H1 (cell line): ENCODE measurements at regions of chr7 and their contacts with region 1.

Region 1: GRCh38 chr7:135232720-135233119 is 918 bp upstream of the STRA8 start:
- DNase-seq: peak in 1 of 2 experiments; percentile 78
- H3K4me3 ChIP-seq: no peak overlapping the region
- H3K27ac ChIP-seq: no peak overlapping the region
- H3K4me1 ChIP-seq: no peaks in the 10 kb centered on the region
- H3K27me3 ChIP-seq: no peaks in the 10 kb centered on the region
- CTCF ChIP-seq: peak; percentile 57 to 79 (median 75)
- EP300 ChIP-seq: no peak
- POLR2A ChIP-seq: no peak
- RAD21 ChIP-seq: peak; percentile 19 to 46; a peak in 3 of 4 replicates

Region 2: DNA sequence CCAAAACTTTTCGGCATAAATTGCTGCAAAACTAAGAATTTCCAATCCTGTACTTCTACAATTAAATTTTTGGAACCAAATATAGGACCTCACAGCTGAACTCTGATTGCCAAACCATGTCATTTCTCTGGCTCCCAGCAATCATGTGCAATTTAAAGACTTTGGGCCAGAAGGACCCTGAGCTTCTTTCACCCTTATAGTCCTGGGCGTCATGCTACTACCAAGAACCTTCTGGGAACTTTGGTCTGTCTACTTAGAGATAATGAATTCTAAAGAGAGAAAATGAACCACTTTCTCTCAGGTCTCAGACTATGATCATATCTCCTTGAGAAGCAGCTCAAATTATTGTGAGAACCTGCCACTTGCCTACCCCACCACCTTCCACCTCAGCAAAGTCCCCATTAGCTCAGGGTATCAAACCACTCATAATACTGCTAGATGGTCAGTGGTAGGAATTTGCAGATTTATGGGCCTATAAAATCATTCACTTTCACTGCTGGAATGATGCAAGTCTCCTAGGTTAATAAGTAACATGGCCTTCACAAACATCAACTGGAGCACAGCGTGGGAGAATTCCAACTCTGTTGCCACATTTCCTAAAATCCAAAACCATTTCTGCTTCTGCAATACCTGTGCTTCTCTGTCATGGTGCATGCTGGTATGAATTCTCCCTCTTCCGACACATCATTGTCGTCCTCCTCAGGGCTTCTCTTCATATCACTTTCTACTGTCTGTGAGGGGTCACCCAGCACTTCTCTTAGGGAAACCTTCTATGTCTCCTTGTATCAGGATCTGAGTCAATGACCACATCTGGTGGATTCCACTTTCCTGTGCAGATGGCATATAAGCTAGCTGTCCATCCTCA is 14.8 kb before region 1 on chr7:
- CTCF ChIA-PET with region 1: interaction called, 16 read pairs
- POLR2A ChIA-PET with region 1: no interaction called
- DNase-seq: no peak
- H3K4me3 ChIP-seq: no peak overlapping the region
- H3K27ac ChIP-seq: no peak overlapping the region
- H3K4me1 ChIP-seq: peaks cover 0 to 4% (median 1%) of the 10 kb centered on the region in 4 experiments; a peak in 2 of 7 replicates
- H3K27me3 ChIP-seq: no peaks in the 10 kb centered on the region
- CTCF ChIP-seq: no peak
- EP300 ChIP-seq: no peak
- POLR2A ChIP-seq: no peak
- RAD21 ChIP-seq: no peak

Region 3: DNA sequence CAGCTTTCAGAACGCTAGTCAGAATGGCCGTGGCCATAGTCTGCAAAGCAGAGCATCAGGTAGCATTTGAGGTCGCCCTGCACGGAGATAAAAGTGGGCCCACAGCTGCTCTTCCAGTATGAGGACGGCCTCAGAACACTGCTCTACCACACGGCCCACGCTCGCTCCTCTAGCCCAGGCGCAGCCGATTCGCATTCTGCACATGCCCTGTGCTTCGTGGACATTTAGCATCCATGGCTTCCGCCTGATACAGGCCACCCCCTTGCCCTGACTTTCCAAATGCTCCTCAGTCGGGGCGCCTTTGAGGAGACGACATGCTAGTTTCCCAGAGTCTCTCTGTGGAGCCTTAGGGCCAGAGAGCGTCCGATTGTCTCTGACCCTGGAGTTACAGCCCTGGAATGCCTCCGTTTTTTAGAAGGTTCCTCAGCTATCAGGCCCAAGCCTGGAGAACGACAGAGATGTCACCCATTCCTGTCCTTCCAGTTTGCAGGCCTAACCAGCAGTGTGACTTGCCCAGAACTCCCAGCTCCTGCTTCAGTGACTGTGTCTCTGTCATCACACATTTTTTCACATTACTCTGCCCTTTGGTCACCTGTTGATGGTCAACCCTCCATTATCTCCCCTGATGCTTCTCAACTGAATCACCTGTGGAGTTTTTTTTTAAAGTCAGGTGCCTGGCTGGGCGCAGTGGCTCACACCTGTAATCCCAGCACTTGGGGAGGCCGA is 15.2 kb after region 1 on chr7:
- CTCF ChIA-PET with region 1: interaction called, 10 read pairs
- POLR2A ChIA-PET with region 1: no interaction called
- DNase-seq: peak in 1 of 2 experiments; percentile 20
- H3K4me3 ChIP-seq: no peak overlapping the region
- H3K27ac ChIP-seq: no peak overlapping the region
- H3K4me1 ChIP-seq: no peaks in the 10 kb centered on the region
- H3K27me3 ChIP-seq: no peaks in the 10 kb centered on the region
- CTCF ChIP-seq: no peak
- EP300 ChIP-seq: no peak
- POLR2A ChIP-seq: no peak
- RAD21 ChIP-seq: no peak

Region 4: GRCh38 chr7:135710417-135711138 is 477.9 kb after region 1 on chr7:
- CTCF ChIA-PET with region 1: no interaction called
- POLR2A ChIA-PET with region 1: no interaction called
- DNase-seq: peak in 1 of 2 experiments; percentile 73
- H3K4me3 ChIP-seq: peak overlapping the region in 1 of 4 experiments; percentile 37; a peak in 1 of 8 replicates
- H3K27ac ChIP-seq: no peak overlapping the region
- H3K4me1 ChIP-seq: peaks cover 0 to 4% (median 2%) of the 10 kb centered on the region in 4 experiments; a peak in 1 of 7 replicates
- H3K27me3 ChIP-seq: no peaks in the 10 kb centered on the region
- CTCF ChIP-seq: peak; percentile 42 to 76 (median 45)
- EP300 ChIP-seq: no peak
- POLR2A ChIP-seq: no peak
- RAD21 ChIP-seq: no peak; a peak in 1 of 4 replicates